ENCODE measurements at regions of chr11 and their contacts with region 1.

Region 1: GRCh38 chr11:46315033-46315738 is 32.1 kb upstream of the DGKZ start:
- DNase-seq: peak; percentile 84
- CTCF ChIP-seq: peak; percentile 88

Region 2: DNA sequence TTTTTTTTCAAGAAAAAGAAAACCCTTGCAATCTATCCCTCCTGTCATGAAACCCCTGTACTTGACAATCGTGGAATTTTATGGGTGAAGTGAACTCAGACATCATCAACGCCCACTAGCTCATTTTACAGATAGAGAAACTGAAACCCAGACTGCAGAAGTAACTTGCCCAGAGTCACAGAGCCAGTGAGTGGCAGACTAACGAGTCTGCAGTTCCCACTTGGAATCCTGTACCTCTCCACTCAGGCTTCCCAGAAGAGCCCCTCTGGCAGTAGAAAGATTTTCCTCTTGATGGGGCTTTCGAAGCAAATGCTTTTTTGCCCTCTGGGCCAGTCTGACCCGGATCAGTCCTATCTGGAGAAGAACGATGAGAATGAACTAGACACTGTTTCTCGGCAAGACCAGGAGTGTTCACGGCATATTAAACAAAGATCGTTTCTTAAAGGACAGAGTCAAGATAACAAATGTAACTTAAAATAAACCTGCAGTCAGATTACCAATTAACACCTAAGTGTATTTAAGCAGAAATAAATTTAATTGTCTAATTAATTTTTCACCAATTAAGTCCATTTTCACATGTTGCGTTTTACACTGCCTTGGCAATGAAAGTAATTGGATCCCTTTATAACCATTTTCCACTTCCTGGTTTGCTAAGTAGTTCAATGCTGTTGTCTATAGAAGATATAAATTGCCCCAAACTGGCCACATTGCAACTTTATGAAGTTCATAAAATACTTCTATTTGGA is 99.0 kb before region 1 on chr11:
- CTCF ChIA-PET with region 1: no interaction called
- POLR2A ChIA-PET with region 1: no interaction called
- DNase-seq: peak; percentile 31
- CTCF ChIP-seq: no peak

Region 3: GRCh38 chr11:46278387-46279125 is 36.6 kb before region 1 on chr11:
- CTCF ChIA-PET with region 1: interaction called, 18 read pairs
- POLR2A ChIA-PET with region 1: no interaction called
- DNase-seq: no peak
- CTCF ChIP-seq: peak; percentile 57

Region 4: DNA sequence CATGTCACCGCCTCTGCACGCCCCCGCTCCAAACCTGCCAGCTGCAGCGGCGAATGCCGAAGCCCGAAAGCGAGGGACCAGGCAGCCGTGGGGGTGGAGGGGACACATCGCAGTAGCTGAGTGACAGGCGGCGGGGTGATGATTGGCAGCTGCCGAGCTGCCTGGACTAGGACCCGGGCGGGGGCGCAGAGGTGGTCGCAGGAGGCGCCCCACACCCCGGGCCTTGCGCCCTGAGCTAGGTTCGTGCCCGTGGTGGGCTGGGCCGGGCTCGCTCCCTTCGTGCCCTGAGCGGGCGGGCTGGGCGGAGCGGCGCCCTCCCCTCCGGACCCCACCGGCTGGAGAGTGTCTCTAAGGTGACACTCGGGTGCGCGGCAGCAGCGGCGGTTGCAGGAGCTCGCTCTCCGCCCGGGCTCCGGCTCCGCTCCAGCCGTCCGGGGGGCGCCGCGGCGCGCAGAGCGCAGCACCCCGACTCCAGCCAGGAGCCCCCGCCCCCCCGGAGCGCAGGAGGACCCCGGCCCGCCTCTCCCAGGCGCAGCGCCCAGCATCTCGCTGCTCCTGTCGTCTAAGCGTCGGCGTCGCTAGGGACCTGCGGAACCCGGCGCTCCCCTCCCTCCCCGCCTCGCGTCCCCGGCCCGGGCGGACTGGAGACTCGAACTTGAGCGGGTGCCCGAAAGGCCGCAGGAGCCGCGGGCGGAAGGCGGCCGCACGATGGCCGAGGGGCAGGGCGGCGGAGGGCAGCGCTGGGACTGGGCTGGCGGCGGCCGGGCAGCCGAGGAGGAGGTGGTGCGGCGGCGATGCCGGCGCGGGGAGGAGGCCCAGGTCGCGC is 17.6 kb after region 1 on chr11:
- CTCF ChIA-PET with region 1: interaction called, 23 read pairs
- POLR2A ChIA-PET with region 1: no interaction called
- DNase-seq: no peak
- CTCF ChIP-seq: no peak

Region 5: GRCh38 chr11:46346886-46347636 is 31.9 kb after region 1 on chr11 and contains the start of gene DGKZ:
- CTCF ChIA-PET with region 1: interaction called, 26 read pairs
- POLR2A ChIA-PET with region 1: no interaction called
- DNase-seq: peak; percentile 94
- CTCF ChIP-seq: peak; percentile 97

Measured in GM10248 (cell line).